PC-3 (cell line): ENCODE measurements at regions of chr10 and their contacts with region 1.

Region 1: DNA sequence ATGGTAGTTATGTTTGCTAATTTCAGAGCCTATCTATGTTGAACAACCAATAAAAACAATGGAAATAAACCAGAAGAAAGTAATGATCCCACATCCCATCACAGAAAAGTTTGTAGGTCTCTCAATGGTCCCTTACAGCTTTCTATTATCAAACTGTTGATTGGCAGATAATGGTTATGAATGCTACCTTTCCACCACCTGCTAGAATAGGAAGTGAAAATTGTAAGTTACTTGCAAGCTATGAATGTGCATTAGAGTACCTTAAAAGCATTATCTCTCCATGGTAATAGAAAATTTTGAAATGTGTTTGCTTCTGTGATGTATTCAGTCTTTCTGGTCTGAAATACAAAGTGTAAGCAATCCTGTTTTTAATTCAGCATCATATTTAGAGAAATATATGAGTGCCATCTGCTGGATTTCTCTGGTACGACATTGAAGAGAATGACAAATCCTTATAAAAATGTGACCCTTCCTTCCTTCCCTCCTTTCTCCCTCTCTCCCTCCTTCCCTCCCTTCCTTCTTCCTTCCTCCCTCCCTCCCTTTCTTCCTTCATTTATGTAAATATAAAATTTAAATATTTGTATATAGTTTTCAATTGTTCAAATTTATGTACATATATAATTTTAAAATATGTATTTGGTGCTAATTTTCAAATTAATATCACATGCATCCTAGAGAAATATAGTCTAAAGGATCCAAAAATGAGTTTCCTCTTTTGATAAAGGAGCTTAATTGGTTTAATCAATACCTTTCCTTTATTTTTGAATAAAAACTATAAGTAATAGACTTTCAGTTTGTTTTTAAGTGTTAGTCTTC is 41.4 kb upstream of the PNLIPRP3 start:
- DNase-seq: peak; percentile 50
- ATAC-seq: no peak
- H3K4me3 ChIP-seq: no peak overlapping the region
- H3K27ac ChIP-seq: no peak overlapping the region
- H3K4me1 ChIP-seq: no peaks in the 10 kb centered on the region
- H3K27me3 ChIP-seq: peaks cover 10% of the 10 kb centered on the region; the same call in 1 of the 2 replicates
- CTCF ChIP-seq: peak; percentile 54

Region 2: GRCh38 chr10:115355162-115355760 is 1030.9 kb before region 1 on chr10:
- CTCF ChIA-PET with region 1: no interaction called
- POLR2A ChIA-PET with region 1: no interaction called
- intact Hi-C with region 1: loop called (anchors 2 kb)
- DNase-seq: peak; percentile 62
- ATAC-seq: peak; percentile 50; the same call in 1 of the 2 replicates
- H3K4me3 ChIP-seq: no peak overlapping the region
- H3K27ac ChIP-seq: no peak overlapping the region
- H3K4me1 ChIP-seq: no peaks in the 10 kb centered on the region
- H3K27me3 ChIP-seq: no peaks in the 10 kb centered on the region
- CTCF ChIP-seq: peak; percentile 75

Region 3: DNA sequence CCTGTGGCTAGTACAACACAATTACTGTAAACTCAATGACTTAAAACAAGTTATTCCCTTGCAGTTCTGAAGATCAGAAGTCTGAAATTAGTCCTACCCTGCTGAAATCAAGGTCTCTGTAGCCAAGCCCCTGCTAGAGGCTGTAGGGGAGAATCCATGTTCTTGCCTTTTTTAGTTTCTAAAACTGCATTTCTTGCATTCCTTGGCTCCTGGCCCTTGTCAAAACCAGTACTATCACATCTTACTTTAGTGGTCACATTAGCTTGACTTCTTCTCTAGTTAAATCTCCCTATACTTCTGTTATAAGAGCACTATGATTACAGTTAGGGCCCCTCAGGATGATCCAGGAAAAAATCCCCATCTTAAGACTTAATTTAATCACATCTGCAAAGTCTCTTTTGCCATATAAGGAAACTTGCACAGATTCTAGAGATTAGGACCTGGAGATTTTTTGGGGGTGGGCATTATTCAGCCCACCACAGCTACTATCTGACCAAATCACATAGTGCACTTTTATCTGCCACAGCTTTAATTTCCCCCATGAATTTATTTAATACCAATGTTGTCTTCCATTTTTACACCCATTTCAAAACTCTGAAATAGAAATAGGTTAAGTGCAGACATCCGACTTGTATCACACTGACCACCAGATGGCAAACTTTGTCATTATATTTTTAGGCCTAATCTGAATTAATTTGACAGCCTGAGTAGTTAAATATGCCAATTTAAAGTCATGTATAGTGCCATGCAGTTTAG is 680.0 kb before region 1 on chr10:
- CTCF ChIA-PET with region 1: no interaction called
- POLR2A ChIA-PET with region 1: no interaction called
- intact Hi-C with region 1: loop called (anchors 5 kb)
- DNase-seq: peak; percentile 35
- ATAC-seq: no peak
- H3K4me3 ChIP-seq: no peak overlapping the region
- H3K27ac ChIP-seq: no peak overlapping the region
- H3K4me1 ChIP-seq: no peaks in the 10 kb centered on the region
- H3K27me3 ChIP-seq: no peaks in the 10 kb centered on the region
- CTCF ChIP-seq: peak; percentile 60

Region 4: GRCh38 chr10:116408719-116409118 is 22.5 kb after region 1 on chr10:
- CTCF ChIA-PET with region 1: no interaction called
- POLR2A ChIA-PET with region 1: no interaction called
- intact Hi-C with region 1: no loop called
- DNase-seq: no peak
- ATAC-seq: no peak
- H3K4me3 ChIP-seq: no peak overlapping the region
- H3K27ac ChIP-seq: no peak overlapping the region
- H3K4me1 ChIP-seq: no peaks in the 10 kb centered on the region
- H3K27me3 ChIP-seq: peaks cover 19% of the 10 kb centered on the region
- CTCF ChIP-seq: no peak